Left cardiac atrium (tissue), 4 donors: ENCODE measurements at regions of chr14 and their contacts with region 1.

Region 1: GRCh38 chr14:22852940-22853767 is 16.8 kb downstream of the MMP14 start:
- DNase-seq: peak; percentile 89
- ATAC-seq: peak; percentile 50 to 56

Region 2: DNA sequence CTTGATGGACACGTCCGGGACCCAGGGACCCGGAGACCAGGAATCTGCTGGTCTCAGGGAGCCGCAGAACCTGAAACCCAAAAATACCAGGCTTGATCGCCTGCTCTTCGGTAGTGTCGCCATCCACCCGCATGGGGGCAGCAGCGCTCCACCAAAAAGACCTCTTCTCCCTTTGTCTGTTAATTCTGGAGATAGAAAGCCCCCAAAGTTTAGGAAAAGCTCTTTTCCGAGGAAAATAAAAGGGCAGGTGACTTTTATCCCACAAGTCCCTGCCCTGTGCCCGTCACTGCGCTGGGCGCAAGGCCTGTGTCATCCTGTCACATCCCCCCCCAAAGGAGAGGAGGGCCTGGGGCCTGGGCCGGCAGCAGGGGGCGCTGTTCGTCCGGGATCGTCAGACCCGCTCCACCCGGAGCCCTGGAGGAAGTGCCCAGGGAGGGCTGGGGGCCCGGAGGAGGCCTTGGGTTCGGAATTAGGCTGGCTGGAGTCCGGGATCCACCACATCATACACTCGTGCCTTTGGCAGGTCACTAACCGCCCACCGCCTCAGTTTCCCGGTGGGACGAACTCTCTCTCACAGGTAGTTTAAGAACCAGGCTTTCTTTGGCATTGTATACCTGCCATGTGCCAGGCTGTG is 296.0 kb before region 1 on chr14:
- intact Hi-C with region 1: loop called in 1 of 2 experiments (anchors 10 kb)
- DNase-seq: peak; percentile 87
- ATAC-seq: peak; percentile 83 to 86

Region 3: DNA sequence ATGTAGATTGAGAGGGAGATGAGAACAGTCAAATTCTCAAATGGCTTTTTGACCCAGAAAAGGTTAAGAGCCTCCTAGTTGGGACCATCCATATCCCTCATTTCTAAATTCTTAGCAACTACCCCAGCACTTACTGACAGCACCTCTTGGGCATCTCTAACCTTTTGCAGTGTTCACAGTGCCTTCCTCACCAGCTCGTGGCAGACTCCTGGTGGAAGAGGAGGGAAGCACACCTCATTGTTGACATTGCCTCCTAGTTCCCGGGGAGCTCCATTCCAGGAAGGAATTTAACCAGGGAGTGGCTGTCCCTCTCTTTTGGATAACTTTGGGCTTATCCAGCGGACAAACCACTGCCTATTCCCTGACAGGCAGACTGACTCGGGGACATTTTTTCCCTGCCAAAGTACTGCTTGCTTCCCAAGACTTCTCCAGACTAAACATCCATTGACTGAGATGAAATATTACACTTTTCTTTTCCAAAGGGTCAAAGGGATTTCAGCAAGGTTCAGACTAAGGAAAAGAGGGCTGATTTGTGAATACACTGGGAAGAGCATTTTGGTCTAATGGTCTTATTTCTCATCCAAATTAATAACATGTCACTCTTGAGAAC is 200.0 kb before region 1 on chr14:
- intact Hi-C with region 1: loop called in 1 of 2 experiments (anchors 10 kb)
- DNase-seq: peak; percentile 48
- ATAC-seq: peak; percentile 78 to 92